ENCODE measurements at regions of chr4 and their contacts with region 1.

Region 1: GRCh38 chr4:172830295-172830764 is 338.3 kb upstream of the GALNT7 start:
- DNase-seq: no peak
- H3K4me3 Mint-ChIP-seq: no peak overlapping the region
- H3K27ac Mint-ChIP-seq: no peak overlapping the region
- H3K4me1 Mint-ChIP-seq: no peaks in the 10 kb centered on the region
- H3K27me3 Mint-ChIP-seq: peaks cover 7% of the 10 kb centered on the region

Region 2: GRCh38 chr4:170990989-170991589 is 1839.2 kb before region 1 on chr4:
- CTCF ChIA-PET with region 1: no interaction called
- intact Hi-C with region 1: loop called (anchors 5 kb)
- DNase-seq: peak; percentile 4
- H3K4me3 Mint-ChIP-seq: no peak overlapping the region
- H3K27ac Mint-ChIP-seq: no peak overlapping the region
- H3K4me1 Mint-ChIP-seq: no peaks in the 10 kb centered on the region
- H3K27me3 Mint-ChIP-seq: no peaks in the 10 kb centered on the region

Region 3: DNA sequence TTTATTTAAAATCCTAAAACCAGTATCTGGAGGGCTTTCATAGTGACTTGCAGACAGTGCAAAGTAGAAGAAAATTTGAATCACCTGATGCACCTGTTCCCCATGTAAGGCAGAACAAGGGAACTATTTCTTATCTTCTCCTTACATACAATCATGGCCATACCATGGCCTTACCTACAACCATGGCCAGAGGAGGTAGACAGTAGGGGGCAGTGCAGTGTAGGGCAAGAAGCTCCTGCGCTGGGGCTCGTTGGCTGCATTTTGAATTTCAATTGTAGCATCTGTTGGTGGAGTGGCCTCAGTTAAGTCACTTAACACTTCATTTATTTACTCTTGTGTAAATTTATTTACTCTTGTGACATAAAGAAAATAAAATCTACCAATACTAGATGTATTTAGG is 984.1 kb before region 1 on chr4:
- CTCF ChIA-PET with region 1: no interaction called
- intact Hi-C with region 1: loop called (anchors 2 kb)
- DNase-seq: peak; percentile 24
- H3K4me3 Mint-ChIP-seq: no peak overlapping the region
- H3K27ac Mint-ChIP-seq: no peak overlapping the region
- H3K4me1 Mint-ChIP-seq: no peaks in the 10 kb centered on the region
- H3K27me3 Mint-ChIP-seq: no peaks in the 10 kb centered on the region

Region 4: GRCh38 chr4:172786039-172786792 is 44.1 kb before region 1 on chr4:
- CTCF ChIA-PET with region 1: no interaction called
- intact Hi-C with region 1: no loop called
- DNase-seq: no peak
- H3K4me3 Mint-ChIP-seq: no peak overlapping the region
- H3K27ac Mint-ChIP-seq: no peak overlapping the region
- H3K4me1 Mint-ChIP-seq: no peaks in the 10 kb centered on the region
- H3K27me3 Mint-ChIP-seq: peaks cover 5% of the 10 kb centered on the region

Measured in activated naive CD4-positive, alpha-beta T cell treated with anti-CD3 and anti-CD28 coated beads for 36 hours (primary cell).